PC-9 (cell line): ENCODE measurements at regions of chr6 and their contacts with region 1.

Region 1: GRCh38 chr6:7673063-7673536 is 52.8 kb upstream of the BMP6 start:
- DNase-seq: peak in 1 of 2 experiments; percentile 83
- H3K4me3 ChIP-seq: no peak overlapping the region
- H3K27ac ChIP-seq: no peak overlapping the region
- H3K4me1 ChIP-seq: peaks cover 11% of the 10 kb centered on the region
- H3K27me3 ChIP-seq: no peaks in the 10 kb centered on the region
- CTCF ChIP-seq: no peak

Region 2: DNA sequence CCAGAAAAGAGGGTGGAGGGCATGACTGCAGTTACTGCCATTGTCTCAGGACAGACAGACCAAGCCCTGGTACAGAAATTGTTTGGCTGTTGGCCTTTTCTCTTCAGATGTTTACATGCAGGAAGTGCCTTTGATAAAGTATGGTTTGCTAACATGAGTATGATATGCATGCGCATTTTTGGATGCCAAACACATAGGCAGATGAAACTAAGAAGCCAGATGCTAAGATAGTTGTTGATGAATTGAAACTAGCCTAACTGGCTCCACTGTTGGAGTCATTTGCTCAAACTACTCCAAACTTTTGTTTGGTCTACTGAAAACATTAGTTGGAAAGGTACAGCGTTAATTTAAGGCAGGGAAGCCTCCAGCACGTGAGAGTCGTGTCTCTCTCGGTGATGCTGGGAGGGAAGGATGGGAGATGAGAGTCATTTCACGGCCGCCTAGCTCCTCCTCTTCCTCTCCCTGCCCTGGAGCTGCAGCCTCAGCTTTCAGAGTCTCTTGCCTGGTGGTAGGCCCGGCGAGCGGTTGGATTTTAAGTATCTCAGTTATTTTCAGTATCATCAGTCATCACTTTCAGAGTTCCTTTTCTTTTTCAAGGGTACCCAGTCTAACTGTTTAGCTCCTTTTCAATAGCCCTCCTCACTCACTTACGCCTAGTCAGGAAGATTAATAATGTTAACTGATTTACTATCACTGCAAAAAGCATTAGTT is 535.6 kb before region 1 on chr6:
- CTCF ChIA-PET with region 1: no interaction called
- POLR2A ChIA-PET with region 1: no interaction called
- intact Hi-C with region 1: no loop called
- DNase-seq: no peak
- H3K4me3 ChIP-seq: no peak overlapping the region
- H3K27ac ChIP-seq: no peak overlapping the region
- H3K4me1 ChIP-seq: peaks cover 31% of the 10 kb centered on the region
- H3K27me3 ChIP-seq: no peaks in the 10 kb centered on the region
- CTCF ChIP-seq: no peak

Region 3: DNA sequence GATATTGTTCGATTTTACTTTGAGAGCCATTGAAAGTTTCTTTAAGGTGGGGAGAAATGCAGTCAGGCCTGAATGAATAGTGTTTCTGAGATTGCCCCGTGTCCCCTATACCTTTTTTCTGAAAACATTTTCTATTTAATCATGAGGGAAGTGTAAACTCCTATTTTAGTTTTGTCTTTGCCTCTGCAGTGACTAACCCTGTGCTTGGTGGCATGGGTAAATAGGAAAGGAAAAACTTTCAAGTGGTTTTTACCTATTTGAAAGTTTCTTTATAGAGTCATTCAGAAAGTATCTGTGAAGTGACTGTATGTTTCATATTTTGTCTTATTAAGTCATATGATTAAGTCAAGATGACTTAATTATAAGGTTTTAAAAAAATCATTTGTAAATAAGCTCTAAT is 68.6 kb before region 1 on chr6:
- CTCF ChIA-PET with region 1: no interaction called
- POLR2A ChIA-PET with region 1: no interaction called
- intact Hi-C with region 1: no loop called
- DNase-seq: no peak
- H3K4me3 ChIP-seq: no peak overlapping the region
- H3K27ac ChIP-seq: no peak overlapping the region
- H3K4me1 ChIP-seq: no peaks in the 10 kb centered on the region
- H3K27me3 ChIP-seq: no peaks in the 10 kb centered on the region
- CTCF ChIP-seq: no peak

Region 4: DNA sequence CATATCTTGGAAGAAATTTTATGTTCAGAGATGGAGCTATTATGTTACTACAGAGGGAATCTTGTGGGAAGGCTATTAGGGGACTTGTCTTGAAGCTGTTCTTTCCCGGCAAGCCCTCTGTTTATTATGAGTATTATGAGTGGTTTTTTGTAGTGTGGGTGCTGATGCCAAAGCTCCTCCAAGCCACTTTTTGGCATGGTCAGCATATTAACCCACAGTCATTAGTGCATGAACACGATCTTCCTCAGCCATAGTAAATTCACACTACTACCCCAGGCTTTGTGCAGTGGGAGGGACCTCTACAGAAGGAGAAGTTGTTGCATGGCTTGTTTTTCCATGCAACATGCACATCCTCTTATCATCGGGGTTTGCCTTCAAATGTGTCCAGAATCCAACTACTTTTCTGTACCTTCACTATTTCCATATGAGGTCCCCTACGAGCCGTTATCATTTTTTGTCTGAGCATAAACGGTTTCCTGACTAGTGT is 46.3 kb after region 1 on chr6:
- CTCF ChIA-PET with region 1: interaction called, 3 read pairs
- POLR2A ChIA-PET with region 1: no interaction called
- intact Hi-C with region 1: loop called (anchors 2 kb)
- DNase-seq: no peak
- H3K4me3 ChIP-seq: no peak overlapping the region
- H3K27ac ChIP-seq: no peak overlapping the region
- H3K4me1 ChIP-seq: no peaks in the 10 kb centered on the region
- H3K27me3 ChIP-seq: no peaks in the 10 kb centered on the region
- CTCF ChIP-seq: no peak

Region 5: DNA sequence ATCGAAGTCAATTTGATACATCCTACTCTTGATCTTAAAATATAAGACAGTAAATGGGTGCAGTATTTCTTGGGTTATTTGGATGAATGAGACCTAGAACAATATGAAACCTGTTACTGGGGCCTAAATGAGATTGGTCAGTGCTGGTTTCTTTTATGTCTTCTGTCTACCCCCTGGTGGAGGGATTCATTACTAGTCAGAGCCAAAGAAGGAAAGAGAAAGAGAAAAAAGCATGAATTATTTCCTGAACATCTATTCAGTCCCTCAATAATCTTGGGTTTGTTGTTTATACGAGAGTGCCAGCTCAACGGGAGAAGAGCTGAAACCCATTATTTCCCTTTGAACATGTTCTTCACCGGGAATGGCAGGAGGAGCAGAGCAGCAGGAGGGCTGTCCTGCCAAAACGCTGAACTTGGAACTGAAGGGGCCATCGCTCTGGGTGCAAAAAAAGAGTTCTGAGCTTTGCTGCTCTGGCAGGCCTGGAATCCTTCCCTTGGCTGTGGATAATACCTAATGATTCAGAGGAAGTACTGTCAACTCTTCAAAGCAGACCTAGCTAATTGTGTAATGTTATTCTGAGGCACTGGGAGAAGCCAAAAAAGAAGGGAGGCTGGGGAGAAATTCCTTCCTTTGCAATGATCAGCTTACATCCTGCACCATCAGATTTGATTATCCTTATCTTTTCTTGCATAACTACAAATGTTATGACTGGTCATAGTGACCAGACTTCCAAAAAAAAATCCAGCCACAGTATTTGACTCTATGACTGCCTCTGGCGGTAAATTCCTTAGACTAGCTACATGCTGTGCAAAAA is 319.1 kb after region 1 on chr6:
- CTCF ChIA-PET with region 1: no interaction called
- POLR2A ChIA-PET with region 1: no interaction called
- intact Hi-C with region 1: loop called (anchors 5 kb)
- DNase-seq: peak in 1 of 2 experiments; percentile 51
- H3K4me3 ChIP-seq: no peak overlapping the region
- H3K27ac ChIP-seq: no peak overlapping the region
- H3K4me1 ChIP-seq: no peaks in the 10 kb centered on the region
- H3K27me3 ChIP-seq: no peaks in the 10 kb centered on the region
- CTCF ChIP-seq: peak; percentile 63